ENCODE measurements at regions of chr3 and their contacts with region 1.

Region 1: DNA sequence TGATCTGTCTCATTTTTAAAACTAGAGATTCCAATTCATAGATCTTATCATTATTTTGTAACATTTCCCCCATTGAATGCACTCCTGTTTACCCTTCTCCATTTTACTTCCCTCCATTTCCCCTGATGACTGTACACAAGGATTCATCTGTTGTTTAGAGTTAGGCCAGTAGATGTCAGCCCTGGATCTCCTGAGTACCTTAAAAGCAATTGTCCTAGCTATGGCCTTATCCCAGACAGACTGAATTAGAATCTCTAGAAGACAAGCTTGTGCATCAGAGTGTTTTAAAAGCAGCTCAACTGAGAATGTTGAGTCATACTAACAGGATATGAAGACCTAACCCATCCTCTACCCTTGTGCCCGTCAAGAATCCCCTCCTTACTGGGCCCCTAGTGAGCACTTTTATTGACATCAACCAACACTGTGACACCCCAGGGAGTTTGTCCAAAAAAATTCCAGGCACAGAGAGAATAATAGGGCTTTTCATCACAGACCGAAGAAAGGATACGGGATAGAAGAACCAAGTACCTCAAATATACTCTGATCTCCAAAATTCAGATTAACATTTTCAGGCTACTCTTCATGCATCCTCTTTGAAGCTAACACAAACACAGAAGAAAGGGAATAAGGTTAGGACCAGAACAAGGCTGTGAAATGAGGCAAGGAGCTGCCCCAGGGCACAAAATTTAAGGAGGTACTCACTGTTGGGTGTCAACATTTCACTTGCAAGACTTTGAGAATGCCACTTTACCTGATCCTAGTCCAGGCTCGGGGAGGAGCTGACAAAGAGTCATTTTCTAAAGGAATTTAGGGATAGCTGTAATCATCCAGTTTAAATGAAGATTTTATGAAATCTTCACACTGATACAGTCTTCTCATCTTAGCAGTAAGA is 17.1 kb downstream of the ZBED2 start:
- DNase-seq: peak; percentile 28
- CTCF ChIP-seq: peak; percentile 45

Region 2: GRCh38 chr3:111588527-111588926 is 10.5 kb after region 1 on chr3:
- CTCF ChIA-PET with region 1: interaction called, 10 read pairs
- POLR2A ChIA-PET with region 1: no interaction called
- DNase-seq: no peak
- CTCF ChIP-seq: no peak

Region 3: GRCh38 chr3:111616417-111617105 is 38.5 kb after region 1 on chr3:
- CTCF ChIA-PET with region 1: interaction called, 31 read pairs
- POLR2A ChIA-PET with region 1: no interaction called
- DNase-seq: peak; percentile 29
- CTCF ChIP-seq: no peak

Region 4: DNA sequence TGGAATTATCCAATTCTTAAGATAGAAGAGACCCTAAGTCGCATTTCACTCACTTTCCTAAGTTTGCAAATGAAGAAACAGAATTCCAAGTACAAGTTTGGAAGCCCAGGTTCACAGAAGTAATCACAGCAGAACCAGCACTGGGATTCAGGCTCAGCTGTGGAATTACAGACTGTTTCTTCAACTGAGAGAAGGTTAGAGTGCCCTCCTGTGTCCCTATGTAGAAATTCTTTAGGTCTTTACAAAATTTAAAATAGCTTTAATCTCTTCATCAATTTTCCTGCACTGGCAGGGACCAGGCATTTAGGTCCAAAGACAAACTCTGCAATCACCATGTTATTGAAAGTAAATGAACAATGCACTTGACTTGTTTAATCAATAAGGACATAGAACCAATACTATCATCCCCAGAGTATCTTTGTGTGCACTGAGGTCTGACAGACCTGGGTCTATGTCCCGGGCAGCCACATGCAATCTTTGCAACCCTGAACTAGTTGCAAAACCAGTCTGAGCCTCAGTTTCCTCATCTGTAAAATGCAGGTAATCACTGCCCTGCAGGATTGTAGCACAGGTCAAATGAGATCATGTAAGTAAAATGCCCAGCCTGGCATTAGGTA is 113.4 kb after region 1 on chr3:
- CTCF ChIA-PET with region 1: interaction called, 10 read pairs
- POLR2A ChIA-PET with region 1: no interaction called
- DNase-seq: peak; percentile 28
- CTCF ChIP-seq: peak; percentile 40